A673 (cell line): ENCODE measurements at regions of chr2 and their contacts with region 1.

Region 1: DNA sequence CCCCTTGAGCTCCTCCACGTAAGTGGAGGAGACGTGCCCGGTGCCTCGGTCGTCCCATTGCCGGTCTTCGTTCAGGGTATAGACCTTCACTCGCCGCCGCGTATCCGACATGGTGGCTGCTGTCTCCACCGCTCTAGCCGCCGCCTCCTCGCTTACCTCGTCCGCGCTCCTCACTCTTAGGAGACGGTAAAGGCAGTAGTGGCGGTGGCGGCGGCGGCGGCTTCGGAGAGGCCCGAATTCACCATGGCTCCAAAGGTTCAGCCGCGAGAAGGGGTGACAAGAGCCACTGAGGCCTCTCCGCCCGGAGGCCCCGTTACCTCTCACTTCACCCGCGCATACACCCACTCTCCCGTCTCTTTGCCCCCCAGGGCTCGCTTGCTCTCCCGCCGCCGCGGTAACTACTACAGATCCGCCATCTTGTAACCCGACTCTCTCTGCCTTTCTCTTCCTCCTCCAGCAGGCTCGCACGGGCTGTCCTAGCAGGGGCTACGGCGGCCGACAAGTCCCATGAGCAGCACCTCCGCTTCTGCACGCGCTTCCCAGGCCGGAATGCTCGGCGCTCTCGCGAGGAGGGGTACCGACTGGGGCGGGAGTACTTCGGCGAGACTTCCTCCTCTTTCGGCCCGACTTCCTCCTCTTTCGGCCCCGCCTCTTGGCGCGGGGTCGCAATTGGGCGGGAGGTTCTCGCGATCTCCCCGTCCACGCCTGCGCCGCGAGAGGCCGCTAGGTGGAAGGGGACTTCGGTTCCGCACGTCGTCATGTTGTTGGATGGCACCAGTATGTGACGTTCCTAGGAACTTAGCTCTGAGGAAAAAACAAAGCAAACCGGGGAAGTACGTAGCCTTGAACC is at the start of gene PPP4R3B:
- DNase-seq: peak; percentile 100
- H3K4me3 ChIP-seq: peak within 1 kb of the TSS; percentile 83
- H3K27ac ChIP-seq: peak within 1 kb of the TSS; percentile 98
- H3K4me1 ChIP-seq: peaks cover 12% of the 10 kb centered on the region
- H3K27me3 ChIP-seq: no peaks in the 10 kb centered on the region
- CTCF ChIP-seq: peak; percentile 42
- total RNA-seq, gene PPP4R3B: 49.8 and 57.9 TPM in 2 replicates

Region 2: DNA sequence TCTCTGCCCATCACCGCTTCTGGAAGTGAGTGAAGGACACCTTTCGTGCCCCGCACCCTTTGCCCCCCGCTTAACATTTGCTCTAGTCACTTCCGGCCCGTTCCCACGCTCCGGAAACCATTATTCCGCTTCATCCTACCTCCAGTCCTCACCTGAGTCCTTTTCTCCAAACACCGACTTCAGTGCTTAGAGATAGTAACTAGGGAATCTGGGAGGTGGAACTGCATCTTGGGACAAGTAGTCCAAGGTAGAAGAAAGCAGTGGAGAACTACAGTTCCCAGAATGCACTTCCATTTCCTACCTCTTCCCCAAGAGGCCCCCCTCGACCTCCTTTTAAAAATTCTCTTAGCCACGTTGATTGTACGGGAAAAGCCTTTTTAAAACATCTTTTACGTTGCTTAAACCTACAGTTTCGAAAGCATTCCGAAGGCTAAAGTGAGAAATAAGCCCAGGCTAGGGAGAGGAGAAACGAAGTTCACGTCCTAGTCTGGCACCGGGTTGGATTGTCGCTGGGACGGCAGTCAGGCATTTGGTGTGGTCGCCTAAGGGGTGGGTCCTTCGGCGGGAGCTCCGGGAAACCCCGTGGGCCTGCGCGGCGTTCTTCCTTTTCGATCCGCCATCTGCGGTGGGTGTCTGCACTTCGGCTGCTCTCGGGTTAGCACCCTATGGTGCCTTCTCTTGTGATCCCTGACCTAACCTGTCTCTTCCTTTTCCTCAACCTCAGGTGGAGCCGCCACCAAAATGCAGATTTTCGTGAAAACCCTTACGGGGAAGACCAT is 385.1 kb before region 1 on chr2 and contains the starts of genes CLHC1 and RPS27A:
- CTCF ChIA-PET with region 1: no interaction called
- POLR2A ChIA-PET with region 1: no interaction called
- intact Hi-C with region 1: loop called (anchors 1 kb)
- DNase-seq: peak; percentile 97
- H3K4me3 ChIP-seq: peak within 1 kb of the TSS; percentile 85
- H3K27ac ChIP-seq: peak within 1 kb of the TSS; percentile 98
- H3K4me1 ChIP-seq: peaks cover 22% of the 10 kb centered on the region
- H3K27me3 ChIP-seq: no peaks in the 10 kb centered on the region
- CTCF ChIP-seq: no peak
- total RNA-seq, gene CLHC1: 9.1 and 10.8 TPM in 2 replicates
- total RNA-seq, gene RPS27A: 876 and 928 TPM in 2 replicates

Region 3: GRCh38 chr2:55268907-55269644 is 348.3 kb before region 1 on chr2 and contains the start of gene MTIF2:
- CTCF ChIA-PET with region 1: no interaction called
- POLR2A ChIA-PET with region 1: no interaction called
- intact Hi-C with region 1: loop called (anchors 10 kb)
- DNase-seq: peak; percentile 95
- H3K4me3 ChIP-seq: peak within 1 kb of the TSS; percentile 65
- H3K27ac ChIP-seq: peak within 1 kb of the TSS; percentile 72
- H3K4me1 ChIP-seq: no peaks in the 10 kb centered on the region
- H3K27me3 ChIP-seq: no peaks in the 10 kb centered on the region
- CTCF ChIP-seq: no peak
- total RNA-seq, gene MTIF2: 45.0 and 52.3 TPM in 2 replicates

Region 4: DNA sequence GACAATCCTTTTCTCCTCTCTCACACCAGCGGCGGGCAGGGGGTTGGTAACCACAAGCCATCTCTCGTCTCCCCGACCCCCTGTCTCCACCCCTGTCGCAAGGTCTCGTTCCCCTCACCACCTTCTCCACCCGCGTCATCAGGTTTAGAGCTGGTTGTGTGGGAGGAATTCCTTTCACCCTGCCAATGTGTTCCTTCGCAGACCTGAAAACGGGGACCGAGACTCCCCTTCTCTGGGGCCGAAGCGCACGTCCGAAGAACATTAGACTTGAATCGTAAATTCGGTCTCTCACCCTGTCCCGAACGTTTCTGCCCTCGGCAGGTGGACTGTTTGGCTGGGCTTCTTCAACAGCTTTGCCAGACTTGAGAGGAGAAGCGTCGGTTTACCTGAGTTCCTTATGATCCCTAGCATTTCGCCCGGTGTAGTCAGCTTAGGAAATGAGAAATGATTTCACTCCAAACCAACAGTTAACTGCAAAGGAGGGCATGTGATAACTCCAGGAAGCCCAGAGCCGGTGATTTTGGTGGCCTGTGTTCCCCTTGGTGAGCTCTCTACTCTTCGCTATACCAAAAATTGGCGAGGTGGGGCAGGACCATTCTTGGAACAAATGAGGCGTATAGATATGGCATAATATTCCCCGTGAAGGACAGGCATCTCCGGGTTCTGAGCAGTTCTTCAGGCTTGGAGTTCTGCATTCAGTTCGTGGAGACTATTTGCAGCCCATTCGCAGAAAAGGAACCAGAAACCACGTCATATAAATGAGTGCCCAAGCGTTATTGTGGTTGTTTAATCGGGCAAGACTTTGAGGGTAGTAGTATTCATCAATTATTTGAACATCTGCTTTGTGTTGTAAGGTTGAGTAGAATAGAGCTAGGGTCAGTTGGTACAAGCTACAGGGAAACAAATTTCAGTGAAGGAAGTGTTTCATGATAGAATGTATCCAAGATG is 97.2 kb before region 1 on chr2:
- CTCF ChIA-PET with region 1: no interaction called
- POLR2A ChIA-PET with region 1: no interaction called
- intact Hi-C with region 1: no loop called
- DNase-seq: no peak
- H3K4me3 ChIP-seq: peak overlapping the region; percentile 72
- H3K27ac ChIP-seq: peak overlapping the region; percentile 59
- H3K4me1 ChIP-seq: peaks cover 4% of the 10 kb centered on the region
- H3K27me3 ChIP-seq: no peaks in the 10 kb centered on the region
- CTCF ChIP-seq: no peak